ENCODE measurements at regions of chr17 and their contacts with region 1.

Region 1: GRCh38 chr17:73255671-73256181 is 6.0 kb downstream of the CPSF4L start:
- DNase-seq: peak; percentile 18 to 74 (median 59)
- ATAC-seq: peak; percentile 74
- H3K4me3 ChIP-seq: no peak overlapping the region
- H3K4me3 Mint-ChIP-seq: no peak overlapping the region
- H3K27ac ChIP-seq: no peak overlapping the region
- H3K27ac Mint-ChIP-seq: no peak overlapping the region
- H3K4me1 ChIP-seq: no peaks in the 10 kb centered on the region
- H3K4me1 Mint-ChIP-seq: peaks cover 4% of the 10 kb centered on the region
- H3K27me3 ChIP-seq: no peaks in the 10 kb centered on the region
- H3K27me3 Mint-ChIP-seq: peaks cover 2% of the 10 kb centered on the region
- CTCF ChIP-seq: peak; percentile 98

Region 2: DNA sequence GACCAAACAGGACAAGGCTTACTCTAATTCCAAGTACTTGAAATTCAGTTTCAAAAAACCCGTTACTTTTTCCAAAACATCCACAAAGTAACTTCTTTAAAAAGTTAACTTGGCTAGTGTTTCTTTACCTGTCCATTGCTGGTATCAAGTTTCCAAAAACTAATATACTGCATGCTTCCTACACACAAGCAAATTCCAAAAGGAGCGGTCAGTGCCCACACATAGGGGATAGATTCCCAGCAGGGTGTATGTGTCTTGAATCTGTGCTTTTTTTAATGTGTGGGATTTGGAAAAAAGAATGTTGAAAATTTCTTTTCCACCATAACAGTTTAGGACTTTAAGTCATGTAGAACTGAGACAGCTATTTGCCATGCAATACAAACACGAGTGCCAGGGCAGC is 1502.7 kb before region 1 on chr17:
- CTCF ChIA-PET with region 1: no interaction called
- POLR2A ChIA-PET with region 1: no interaction called
- intact Hi-C with region 1: no loop called
- DNase-seq: no peak
- ATAC-seq: no peak
- H3K4me3 ChIP-seq: no peak overlapping the region
- H3K4me3 Mint-ChIP-seq: no peak overlapping the region
- H3K27ac ChIP-seq: no peak overlapping the region
- H3K27ac Mint-ChIP-seq: no peak overlapping the region
- H3K4me1 ChIP-seq: no peaks in the 10 kb centered on the region
- H3K4me1 Mint-ChIP-seq: no peaks in the 10 kb centered on the region
- H3K27me3 ChIP-seq: no peaks in the 10 kb centered on the region
- H3K27me3 Mint-ChIP-seq: no peaks in the 10 kb centered on the region
- CTCF ChIP-seq: no peak

Region 3: DNA sequence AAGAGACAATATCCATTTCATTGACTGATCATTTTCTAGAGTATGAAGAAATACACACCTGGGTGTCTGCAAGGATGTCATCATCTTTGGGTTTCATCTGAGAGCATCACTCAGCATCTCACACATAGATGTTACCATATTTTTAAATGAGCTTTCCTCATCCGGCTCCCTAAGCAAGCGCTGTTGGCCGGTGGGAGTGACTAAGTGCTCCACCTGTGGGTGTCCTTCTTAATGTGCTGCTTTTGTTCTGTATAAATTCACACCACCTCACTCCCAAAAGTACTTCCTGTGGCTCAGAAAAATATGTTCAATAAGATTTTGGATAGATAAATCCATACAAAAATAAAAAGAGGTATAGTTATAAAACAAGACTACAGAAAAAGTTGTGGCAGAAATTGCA is 83.5 kb before region 1 on chr17:
- CTCF ChIA-PET with region 1: no interaction called
- POLR2A ChIA-PET with region 1: no interaction called
- intact Hi-C with region 1: no loop called
- DNase-seq: no peak
- ATAC-seq: peak; percentile 14
- H3K4me3 ChIP-seq: no peak overlapping the region
- H3K4me3 Mint-ChIP-seq: no peak overlapping the region
- H3K27ac ChIP-seq: no peak overlapping the region
- H3K27ac Mint-ChIP-seq: no peak overlapping the region
- H3K4me1 ChIP-seq: peaks cover 6% of the 10 kb centered on the region
- H3K4me1 Mint-ChIP-seq: peaks cover 11% of the 10 kb centered on the region
- H3K27me3 ChIP-seq: peaks cover 0 to 7% of the 10 kb centered on the region in 2 experiments
- H3K27me3 Mint-ChIP-seq: peaks cover 16% of the 10 kb centered on the region
- CTCF ChIP-seq: no peak

Region 4: DNA sequence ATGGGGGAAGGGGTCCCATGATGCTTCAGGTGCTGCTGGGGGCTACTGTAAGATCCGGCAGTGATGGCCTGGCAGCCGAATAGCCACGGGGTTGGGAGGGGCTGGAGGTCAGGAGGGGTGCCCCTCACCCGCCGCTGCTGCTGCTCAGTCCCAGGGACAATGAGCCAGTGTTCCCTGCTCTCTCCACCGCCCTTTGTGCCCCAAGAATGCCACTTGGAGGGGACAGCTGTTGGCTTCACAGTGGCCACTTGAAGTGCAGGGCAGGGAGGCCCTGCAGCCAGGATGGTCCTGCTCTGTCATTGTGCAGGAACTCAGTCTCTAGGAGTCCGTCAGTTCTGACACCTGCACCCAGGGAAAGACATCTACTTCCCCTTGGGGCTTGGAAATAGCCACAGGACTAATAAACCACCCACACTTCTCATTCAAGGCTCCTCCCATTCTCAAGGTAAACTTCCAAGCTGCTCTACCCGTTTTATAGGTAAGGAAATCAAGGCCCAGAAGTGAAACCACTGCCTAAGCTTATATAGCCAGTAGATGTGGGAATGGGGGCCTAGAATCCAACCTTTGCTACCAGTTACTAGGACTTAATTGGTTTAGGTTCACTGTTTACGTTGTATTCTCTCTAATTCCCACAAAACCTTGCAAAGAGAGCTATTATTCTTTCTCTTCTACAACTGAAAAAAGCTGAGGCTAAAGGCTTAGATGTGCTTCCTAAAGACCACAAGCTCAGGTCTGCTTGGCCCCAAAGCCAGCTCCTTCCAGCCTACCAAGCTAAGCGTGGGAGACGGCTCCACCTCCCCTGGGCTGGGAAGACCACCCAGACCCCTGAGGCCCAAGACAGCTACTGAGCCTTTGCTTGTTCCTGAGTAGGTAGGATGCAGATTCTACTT is 12.2 kb after region 1 on chr17:
- CTCF ChIA-PET with region 1: interaction called, 21 read pairs
- POLR2A ChIA-PET with region 1: no interaction called
- intact Hi-C with region 1: no loop called
- DNase-seq: no peak
- ATAC-seq: no peak
- H3K4me3 ChIP-seq: no peak overlapping the region
- H3K4me3 Mint-ChIP-seq: no peak overlapping the region
- H3K27ac ChIP-seq: no peak overlapping the region
- H3K27ac Mint-ChIP-seq: no peak overlapping the region
- H3K4me1 ChIP-seq: no peaks in the 10 kb centered on the region
- H3K4me1 Mint-ChIP-seq: no peaks in the 10 kb centered on the region
- H3K27me3 ChIP-seq: no peaks in the 10 kb centered on the region
- H3K27me3 Mint-ChIP-seq: no peaks in the 10 kb centered on the region
- CTCF ChIP-seq: no peak

Region 5: DNA sequence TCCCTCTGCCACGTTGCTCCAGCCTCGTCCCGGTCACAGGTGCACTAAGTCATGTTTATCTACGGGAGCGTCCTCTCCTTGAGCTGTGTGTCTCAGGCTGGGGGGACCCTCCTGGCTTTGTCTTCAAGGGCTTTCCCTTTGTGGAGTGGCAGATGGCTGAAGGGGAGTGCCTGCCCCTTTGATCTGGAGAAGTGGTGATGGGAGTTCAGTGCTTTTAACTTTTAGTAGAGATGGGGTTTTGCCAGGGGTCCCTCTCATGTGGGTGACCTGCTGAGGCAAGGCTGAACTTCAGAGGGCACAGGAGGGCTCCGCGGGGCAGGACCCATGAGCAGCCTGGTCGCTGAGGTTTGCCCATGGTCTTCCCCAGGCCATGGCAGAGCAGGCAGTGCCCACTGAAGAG is 129.2 kb after region 1 on chr17:
- CTCF ChIA-PET with region 1: no interaction called
- POLR2A ChIA-PET with region 1: no interaction called
- intact Hi-C with region 1: no loop called
- DNase-seq: no peak
- ATAC-seq: no peak
- H3K4me3 ChIP-seq: no peak overlapping the region
- H3K4me3 Mint-ChIP-seq: no peak overlapping the region
- H3K27ac ChIP-seq: no peak overlapping the region
- H3K27ac Mint-ChIP-seq: no peak overlapping the region
- H3K4me1 ChIP-seq: no peaks in the 10 kb centered on the region
- H3K4me1 Mint-ChIP-seq: no peaks in the 10 kb centered on the region
- H3K27me3 ChIP-seq: no peaks in the 10 kb centered on the region
- H3K27me3 Mint-ChIP-seq: no peaks in the 10 kb centered on the region
- CTCF ChIP-seq: no peak

Region 6: DNA sequence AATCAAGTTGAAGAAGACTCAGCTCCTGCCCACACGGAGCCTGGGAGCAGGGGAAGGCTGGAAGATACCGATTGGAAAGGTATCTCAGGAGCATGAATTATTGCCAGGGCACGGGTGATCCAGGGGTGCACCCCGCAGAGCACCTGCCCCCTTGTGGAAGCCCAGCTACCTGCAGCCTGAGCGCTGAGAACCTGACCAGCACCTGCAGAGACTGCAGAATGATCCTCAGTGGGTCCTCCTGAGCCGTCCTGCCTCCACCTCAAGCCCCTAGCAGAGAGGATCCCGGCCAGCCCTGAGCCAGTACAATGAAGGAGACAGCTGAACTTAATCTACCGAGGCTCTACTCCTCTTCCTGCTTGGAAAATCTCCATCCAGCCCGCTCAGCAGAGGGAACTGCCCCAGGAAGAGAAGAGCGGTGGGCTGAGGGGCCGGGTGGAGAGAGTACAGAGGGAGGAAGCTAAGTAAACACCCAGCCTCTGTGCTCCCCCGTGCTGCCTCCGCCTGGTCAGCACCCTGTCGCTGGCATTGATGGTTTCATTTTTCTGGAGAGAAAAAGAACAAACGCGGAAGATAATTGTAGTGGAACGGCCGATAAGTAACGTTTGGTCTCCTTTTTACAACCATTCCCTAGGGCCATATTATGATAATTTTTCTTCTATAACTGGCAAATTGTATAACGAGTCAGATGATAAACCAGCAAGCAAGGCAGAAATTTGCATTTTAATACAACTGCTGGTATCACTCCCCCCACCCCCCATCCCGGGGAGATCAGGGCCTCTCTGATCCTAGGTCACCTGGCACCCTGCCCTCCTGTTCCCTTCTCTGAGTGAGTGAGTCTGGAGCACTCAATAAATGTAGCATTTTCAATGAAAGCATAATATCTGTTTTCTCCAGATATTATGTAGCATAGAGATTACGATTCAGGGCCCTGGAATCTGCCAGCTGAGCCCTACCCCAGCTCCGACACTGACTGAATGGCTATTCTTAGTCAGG is 743.2 kb after region 1 on chr17:
- CTCF ChIA-PET with region 1: no interaction called
- POLR2A ChIA-PET with region 1: no interaction called
- intact Hi-C with region 1: loop called in 1 of 2 experiments (anchors 2 kb)
- DNase-seq: peak; percentile 25 to 79 (median 59)
- ATAC-seq: peak; percentile 52
- H3K4me3 ChIP-seq: no peak overlapping the region
- H3K4me3 Mint-ChIP-seq: no peak overlapping the region
- H3K27ac ChIP-seq: no peak overlapping the region
- H3K27ac Mint-ChIP-seq: no peak overlapping the region
- H3K4me1 ChIP-seq: no peaks in the 10 kb centered on the region
- H3K4me1 Mint-ChIP-seq: no peaks in the 10 kb centered on the region
- H3K27me3 ChIP-seq: peaks cover 0 to 3% of the 10 kb centered on the region in 2 experiments
- H3K27me3 Mint-ChIP-seq: peaks cover 11% of the 10 kb centered on the region
- CTCF ChIP-seq: peak; percentile 73

Region 7: DNA sequence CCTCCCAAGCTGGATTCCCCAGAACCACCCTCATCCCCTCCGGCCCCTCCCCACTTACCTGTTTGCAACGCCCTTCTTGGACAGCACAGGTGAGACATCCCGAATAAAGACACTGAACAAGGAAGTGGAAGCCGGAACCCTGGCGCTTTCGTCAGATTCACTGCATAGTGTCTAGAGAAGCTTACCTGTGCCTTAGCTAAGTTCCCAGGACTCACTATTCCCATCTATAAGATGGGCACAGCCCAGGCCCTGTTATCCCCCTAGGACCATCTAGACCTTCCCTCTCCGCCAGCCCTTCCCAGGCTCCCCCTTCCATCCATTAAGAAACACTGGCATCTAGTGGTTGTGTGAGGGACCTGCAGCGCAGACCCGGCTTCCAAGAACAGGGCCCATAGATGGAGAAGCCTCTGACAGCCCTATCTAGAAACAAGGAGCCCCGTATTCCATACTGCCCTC is 920.8 kb after region 1 on chr17:
- CTCF ChIA-PET with region 1: no interaction called
- POLR2A ChIA-PET with region 1: no interaction called
- intact Hi-C with region 1: loop called in 1 of 2 experiments (anchors 5 kb)
- DNase-seq: peak in 6 of 9 experiments; percentile 12 to 58 (median 31)
- ATAC-seq: no peak
- H3K4me3 ChIP-seq: no peak overlapping the region
- H3K4me3 Mint-ChIP-seq: no peak overlapping the region
- H3K27ac ChIP-seq: no peak overlapping the region
- H3K27ac Mint-ChIP-seq: no peak overlapping the region
- H3K4me1 ChIP-seq: no peaks in the 10 kb centered on the region
- H3K4me1 Mint-ChIP-seq: no peaks in the 10 kb centered on the region
- H3K27me3 ChIP-seq: peaks cover 0 to 12% of the 10 kb centered on the region in 2 experiments
- H3K27me3 Mint-ChIP-seq: peaks cover 29% of the 10 kb centered on the region
- CTCF ChIP-seq: peak; percentile 38

Measured in CD8-positive, alpha-beta T cell (primary cell).